ENCODE measurements at regions of chr16 and their contacts with region 1.

Region 1: DNA sequence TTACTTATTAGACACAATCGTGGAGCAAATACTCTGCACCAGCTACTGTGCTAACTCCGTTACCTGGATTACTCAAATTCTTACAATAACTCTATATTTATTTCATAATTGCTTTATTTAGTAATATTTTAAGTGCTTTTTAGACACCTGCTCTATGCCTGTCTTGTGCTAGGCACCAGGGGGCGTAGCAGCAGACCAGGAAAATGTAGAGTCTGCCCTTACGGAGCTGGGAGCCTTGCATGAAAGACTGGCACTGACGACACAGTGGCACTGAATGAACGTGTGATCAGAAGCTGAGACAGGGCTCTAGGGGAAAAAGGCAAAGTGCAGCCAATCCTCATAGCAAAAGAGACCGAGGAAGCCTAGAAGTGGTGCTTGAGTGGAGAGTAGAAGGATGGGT is 486.5 kb downstream of the CDH13 start:
- DNase-seq: peak; percentile 71
- H3K4me3 ChIP-seq: no peak overlapping the region
- H3K27ac ChIP-seq: no peak overlapping the region
- H3K4me1 ChIP-seq: peaks cover 31% of the 10 kb centered on the region
- CTCF ChIP-seq: peak; percentile 87

Region 2: DNA sequence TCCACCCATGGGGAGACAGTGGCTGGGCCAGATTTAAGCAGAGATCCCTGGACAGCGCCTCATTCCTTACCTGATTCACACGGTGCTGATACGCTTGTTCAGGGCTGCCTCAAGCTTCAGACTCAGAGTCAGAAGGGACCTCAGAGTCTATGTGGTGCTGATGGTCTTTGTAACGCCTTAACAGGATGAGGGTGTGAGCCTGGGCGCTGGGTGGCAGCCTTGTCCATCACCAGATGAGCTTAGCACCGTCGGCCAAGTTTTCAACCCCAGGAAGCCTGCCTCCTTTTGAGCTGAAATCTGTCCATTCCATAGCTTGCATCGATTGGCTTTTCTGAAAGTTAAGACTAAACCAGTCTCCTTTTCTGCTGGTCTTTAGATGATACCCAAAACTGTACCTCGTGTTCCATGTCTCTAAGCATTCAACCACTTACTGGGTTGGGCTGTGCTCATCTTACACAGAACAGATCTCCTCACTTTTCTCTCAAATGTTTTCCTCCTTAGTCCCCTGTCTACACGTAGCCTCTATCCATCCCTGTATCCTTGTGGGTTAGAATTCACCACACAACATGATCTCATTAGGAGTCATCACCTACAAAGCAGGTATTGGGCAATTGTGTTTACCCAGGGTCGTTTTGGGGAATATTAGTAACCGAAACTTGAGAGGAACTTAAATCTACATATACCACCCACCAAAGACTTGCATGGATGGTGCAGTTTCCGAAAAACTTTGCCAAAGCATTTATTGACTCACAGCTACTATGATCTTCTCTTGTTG is 86.9 kb after region 1 on chr16:
- CTCF ChIA-PET with region 1: no interaction called
- POLR2A ChIA-PET with region 1: no interaction called
- intact Hi-C with region 1: no loop called
- DNase-seq: peak; percentile 3
- H3K4me3 ChIP-seq: no peak overlapping the region
- H3K27ac ChIP-seq: no peak overlapping the region
- H3K4me1 ChIP-seq: no peaks in the 10 kb centered on the region
- CTCF ChIP-seq: no peak

Region 3: GRCh38 chr16:83215406-83216001 is 102.2 kb after region 1 on chr16:
- CTCF ChIA-PET with region 1: no interaction called
- POLR2A ChIA-PET with region 1: interaction called, 3 read pairs
- intact Hi-C with region 1: loop called (anchors 1 kb)
- DNase-seq: peak; percentile 75
- H3K4me3 ChIP-seq: no peak overlapping the region
- H3K27ac ChIP-seq: no peak overlapping the region
- H3K4me1 ChIP-seq: peaks cover 21% of the 10 kb centered on the region
- CTCF ChIP-seq: peak; percentile 92

Region 4: DNA sequence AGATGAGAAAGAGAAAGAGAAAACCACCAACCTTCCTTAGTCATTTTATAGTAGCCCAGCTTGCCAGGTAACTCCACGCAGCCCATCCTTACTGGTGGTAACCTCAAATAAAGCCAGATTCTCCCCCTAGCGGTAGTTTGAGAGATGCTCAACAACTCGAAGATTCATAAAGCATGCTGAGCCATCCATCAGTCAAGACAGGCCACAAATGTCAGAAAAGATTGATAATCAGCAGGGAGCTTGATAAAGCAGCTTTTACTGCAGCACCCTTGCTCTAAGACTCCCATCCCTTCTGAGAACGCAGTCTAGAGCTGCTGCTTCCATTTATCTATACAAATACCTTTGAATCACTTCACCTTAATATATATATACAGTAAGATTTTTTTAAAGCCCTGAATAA is 242.9 kb after region 1 on chr16:
- CTCF ChIA-PET with region 1: no interaction called
- POLR2A ChIA-PET with region 1: no interaction called
- intact Hi-C with region 1: loop called (anchors 5 kb)
- DNase-seq: peak; percentile 72
- H3K4me3 ChIP-seq: no peak overlapping the region
- H3K27ac ChIP-seq: no peak overlapping the region
- H3K4me1 ChIP-seq: no peaks in the 10 kb centered on the region
- CTCF ChIP-seq: peak; percentile 81

Region 5: GRCh38 chr16:83441517-83441916 is 328.2 kb after region 1 on chr16:
- CTCF ChIA-PET with region 1: no interaction called
- POLR2A ChIA-PET with region 1: no interaction called
- intact Hi-C with region 1: loop called (anchors 10 kb)
- DNase-seq: no peak
- H3K4me3 ChIP-seq: no peak overlapping the region
- H3K27ac ChIP-seq: no peak overlapping the region
- H3K4me1 ChIP-seq: no peaks in the 10 kb centered on the region
- CTCF ChIP-seq: no peak